Activated CD4-positive, alpha-beta T cell treated with anti-CD3 and anti-CD28 coated beads, Interleukin-2, amount 10 ng/mL, durations not matched to agents 24 days and 14 days (primary cell): ENCODE measurements at regions of chr19 and their contacts with region 1.

Region 1: GRCh38 chr19:8158411-8159074 is 9.2 kb upstream of the FBN3 start:
- DNase-seq: peak; percentile 88
- H3K4me3 Mint-ChIP-seq: no peak overlapping the region
- H3K27ac Mint-ChIP-seq: no peak overlapping the region
- H3K4me1 Mint-ChIP-seq: peaks cover 7% of the 10 kb centered on the region
- H3K27me3 Mint-ChIP-seq: peaks cover 22% of the 10 kb centered on the region

Region 2: DNA sequence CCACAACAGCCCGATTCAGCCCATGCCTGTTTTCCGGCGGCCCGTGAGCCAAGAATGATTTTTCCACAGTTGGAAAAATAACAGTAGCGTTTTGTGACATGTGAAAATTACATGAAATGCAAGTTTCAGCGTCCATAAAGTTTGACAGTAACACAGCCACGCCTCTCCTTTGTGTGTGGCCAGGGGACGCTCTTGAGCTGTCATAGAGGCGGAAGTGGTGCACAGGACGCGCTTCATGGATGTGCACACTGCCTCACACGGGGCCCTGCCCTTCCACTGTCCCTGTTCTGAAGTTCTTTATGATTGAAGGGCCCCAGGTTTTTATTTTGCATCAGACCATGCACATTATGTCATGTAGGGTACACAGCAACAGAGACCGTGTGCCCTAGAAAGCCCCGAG is 140.7 kb before region 1 on chr19:
- intact Hi-C with region 1: loop called (anchors 10 kb)
- DNase-seq: peak; percentile 85
- H3K4me3 Mint-ChIP-seq: no peak overlapping the region
- H3K27ac Mint-ChIP-seq: no peak overlapping the region
- H3K4me1 Mint-ChIP-seq: peaks cover 5% of the 10 kb centered on the region
- H3K27me3 Mint-ChIP-seq: no peaks in the 10 kb centered on the region

Region 3: GRCh38 chr19:8208922-8209461 is 50.4 kb after region 1 on chr19 and contains the start of gene CERS4:
- intact Hi-C with region 1: loop called (anchors 1 kb)
- DNase-seq: peak; percentile 91
- H3K4me3 Mint-ChIP-seq: peak within 1 kb of the TSS; percentile 88
- H3K27ac Mint-ChIP-seq: peak within 1 kb of the TSS; percentile 80
- H3K4me1 Mint-ChIP-seq: peaks cover 24% of the 10 kb centered on the region
- H3K27me3 Mint-ChIP-seq: peaks cover 5% of the 10 kb centered on the region
- total RNA-seq, gene CERS4: 30.3 and 30.6 TPM in 2 replicates

Region 4: GRCh38 chr19:8252922-8253589 is 94.5 kb after region 1 on chr19:
- intact Hi-C with region 1: loop called (anchors 1 kb)
- DNase-seq: peak; percentile 95
- H3K4me3 Mint-ChIP-seq: no peak overlapping the region
- H3K27ac Mint-ChIP-seq: no peak overlapping the region
- H3K4me1 Mint-ChIP-seq: peaks cover 9% of the 10 kb centered on the region
- H3K27me3 Mint-ChIP-seq: no peaks in the 10 kb centered on the region